Activated CD4-positive, alpha-beta T cell treated with anti-CD3 and anti-CD28 coated beads for 36 hours (primary cell): ENCODE measurements at regions of chr1 and their contacts with region 1.

Region 1: GRCh38 chr1:166432655-166433054 is 265.9 kb upstream of the FAM78B start:
- DNase-seq: no peak
- ATAC-seq: no peak
- H3K4me3 Mint-ChIP-seq: no peak overlapping the region
- H3K27ac Mint-ChIP-seq: no peak overlapping the region
- H3K4me1 Mint-ChIP-seq: no peaks in the 10 kb centered on the region
- H3K27me3 Mint-ChIP-seq: peaks cover 2% of the 10 kb centered on the region

Region 2: GRCh38 chr1:165928075-165928731 is 504.5 kb before region 1 on chr1:
- CTCF ChIA-PET with region 1: no interaction called
- POLR2A ChIA-PET with region 1: no interaction called
- intact Hi-C with region 1: loop called (anchors 1 to 5 kb)
- DNase-seq: peak; percentile 73
- ATAC-seq: peak; percentile 84
- H3K4me3 Mint-ChIP-seq: no peak overlapping the region
- H3K27ac Mint-ChIP-seq: no peak overlapping the region
- H3K4me1 Mint-ChIP-seq: no peaks in the 10 kb centered on the region
- H3K27me3 Mint-ChIP-seq: peaks cover 8% of the 10 kb centered on the region